ENCODE measurements at regions of chr1 and their contacts with region 1.

Region 1: DNA sequence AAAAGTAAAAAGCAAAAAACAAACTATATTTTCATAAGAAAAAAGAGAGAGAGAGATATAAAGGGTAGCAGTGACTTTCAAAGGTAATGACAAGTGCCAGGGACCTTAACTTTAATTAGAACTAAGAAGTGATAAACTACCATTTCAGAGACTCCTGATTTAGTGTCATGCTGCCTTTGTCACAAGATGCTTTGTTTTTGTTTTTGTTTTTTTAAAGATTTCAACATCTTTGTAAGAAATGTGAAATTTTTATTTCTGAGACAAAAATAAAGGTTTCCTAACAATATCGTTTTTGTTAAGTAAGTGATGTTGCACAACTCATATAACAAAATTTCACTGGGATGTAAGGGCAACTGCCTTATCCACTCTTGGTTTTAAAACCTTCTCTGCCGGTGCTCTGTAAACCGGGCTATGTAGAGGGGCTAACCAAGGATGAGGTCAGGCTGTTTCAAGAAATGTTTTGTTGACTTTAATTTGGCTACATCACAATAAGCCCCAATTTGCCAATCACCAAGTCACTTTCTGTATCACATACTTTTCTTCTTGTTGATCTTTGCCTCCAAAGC is 35.2 kb upstream of the SYT2 start:
- DNase-seq: no peak

Region 2: DNA sequence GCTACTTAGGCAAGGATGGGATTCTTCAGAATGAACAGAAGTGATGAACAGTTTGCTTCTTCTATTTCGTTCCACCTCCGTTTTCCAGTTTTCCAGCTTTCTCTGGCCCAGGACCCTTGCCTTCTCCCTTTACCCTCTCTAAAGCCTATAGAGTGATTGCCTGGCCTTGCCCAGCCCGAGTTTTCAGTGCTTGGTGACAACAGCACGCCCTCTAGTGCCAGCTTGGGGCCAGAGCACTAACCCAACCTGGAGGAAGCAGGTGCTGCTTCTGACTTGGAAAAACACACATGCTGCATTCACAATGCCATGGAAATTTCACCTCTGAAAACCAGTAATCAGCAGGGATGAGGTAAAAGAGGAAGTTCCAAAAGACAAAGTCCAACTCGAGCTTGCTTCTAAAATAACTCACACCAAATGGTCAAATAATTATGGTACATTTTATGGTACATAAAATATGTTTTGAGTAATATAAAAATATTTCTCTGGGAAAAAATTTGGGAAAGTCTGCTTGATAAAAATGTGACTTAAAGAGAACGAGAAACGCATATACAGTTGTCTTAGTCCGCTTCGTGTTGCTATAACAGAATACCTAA is 429.7 kb before region 1 on chr1:
- in situ Hi-C with region 1: no loop called
- DNase-seq: peak; percentile 81

Region 3: GRCh38 chr1:202957733-202958543 is 212.5 kb after region 1 on chr1 and contains the start of gene ADIPOR1:
- in situ Hi-C with region 1: loop called (anchors 25 kb)
- DNase-seq: peak; percentile 85
- total RNA-seq, gene ADIPOR1: 251 and 265 TPM in 2 replicates

Measured in SK-MEL-5 (cell line).